CD8-positive, alpha-beta T cell (primary cell): ENCODE measurements at regions of chr22 and their contacts with region 1.

Region 1: DNA sequence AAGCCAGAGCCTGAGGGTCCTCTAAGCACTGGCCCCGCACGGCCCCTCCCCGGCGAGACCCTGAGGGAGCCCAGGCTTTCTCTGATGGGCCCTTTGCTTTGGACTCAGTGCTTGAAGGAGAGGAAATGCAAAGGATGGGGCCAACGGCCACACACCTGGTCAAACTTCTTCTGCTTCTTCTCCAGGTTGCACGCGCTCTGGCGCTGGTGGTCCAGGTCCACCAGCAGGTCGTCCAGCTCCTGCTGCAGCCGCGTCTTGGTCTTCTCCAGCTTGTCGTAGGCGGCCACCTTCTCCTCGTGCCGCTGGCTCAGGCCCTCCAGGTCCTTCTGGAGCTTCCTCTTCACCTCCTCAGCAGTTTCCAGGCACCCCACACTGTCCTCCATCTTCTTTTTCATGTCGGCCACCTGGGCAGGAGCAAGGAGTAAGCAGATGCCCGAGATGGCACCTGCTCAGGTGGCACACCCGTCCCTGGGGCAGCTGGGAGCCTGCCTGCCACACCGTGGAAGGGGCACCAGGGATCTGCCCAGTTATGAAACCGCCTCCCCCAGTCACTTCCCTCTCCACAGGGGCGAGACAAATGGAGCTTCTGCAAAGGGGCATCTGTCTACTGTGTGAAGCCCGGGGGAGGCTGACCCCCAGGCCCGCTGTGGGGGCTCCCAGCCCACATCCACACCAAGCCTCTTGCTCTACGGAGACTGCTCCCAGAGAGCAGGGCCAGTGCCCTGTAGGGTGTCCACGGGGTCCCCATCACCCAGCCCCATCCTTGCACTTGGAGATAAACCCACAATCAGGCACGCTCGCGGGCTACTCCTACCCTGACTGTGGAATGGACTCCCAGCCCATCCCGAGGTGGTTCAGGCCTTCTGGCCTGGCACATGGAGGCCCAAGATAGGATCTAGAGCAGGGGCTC is 39.2 kb downstream of the APOL1 start:
- DNase-seq: no peak
- ATAC-seq: no peak
- H3K4me3 ChIP-seq: no peak overlapping the region
- H3K4me3 Mint-ChIP-seq: peak overlapping the region; percentile 26
- H3K27ac ChIP-seq: no peak overlapping the region
- H3K27ac Mint-ChIP-seq: peak overlapping the region; percentile 81
- H3K4me1 ChIP-seq: peaks cover 38% of the 10 kb centered on the region
- H3K4me1 Mint-ChIP-seq: peaks cover 39% of the 10 kb centered on the region
- H3K27me3 ChIP-seq: no peaks in the 10 kb centered on the region
- H3K27me3 Mint-ChIP-seq: no peaks in the 10 kb centered on the region
- CTCF ChIP-seq: no peak

Region 2: DNA sequence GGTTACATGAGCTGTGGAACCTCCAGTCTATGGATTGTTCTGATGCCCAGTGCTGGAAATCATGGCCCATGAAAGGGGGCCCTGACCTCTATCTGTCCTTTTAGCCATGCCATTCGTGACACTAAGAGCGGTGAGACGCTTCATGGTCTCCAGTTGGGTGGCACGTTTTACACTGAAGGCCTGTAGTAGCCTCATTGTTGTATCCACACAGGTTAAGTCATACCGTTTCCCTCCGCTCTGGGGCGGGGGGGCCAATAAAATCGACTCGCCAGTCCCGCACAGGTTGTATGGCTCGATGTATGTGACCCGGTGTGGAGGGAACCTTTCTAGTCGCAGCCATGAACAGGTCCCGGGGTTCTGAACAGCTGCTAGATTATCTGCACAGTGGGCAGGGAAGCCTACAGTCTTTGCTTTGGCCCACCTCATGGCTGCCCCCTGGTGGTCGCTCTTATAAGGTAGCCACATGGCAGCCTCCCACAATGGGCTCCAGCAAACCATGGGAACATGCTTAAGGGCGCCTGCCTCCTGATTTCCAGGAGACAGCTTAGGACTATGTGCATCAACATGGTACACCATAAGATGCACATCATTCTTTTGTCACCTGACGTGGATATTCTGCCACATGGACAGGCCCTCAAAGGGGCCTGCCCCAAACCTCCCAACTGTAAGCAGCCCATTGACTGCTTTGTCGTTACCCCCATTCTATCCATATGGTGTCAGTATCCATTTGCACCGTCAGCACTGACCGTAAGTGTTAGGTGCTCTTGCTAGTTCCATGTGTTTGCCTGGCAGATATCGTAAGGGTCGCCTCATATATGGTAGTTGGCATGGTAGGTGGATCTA is 111.8 kb before region 1 on chr22:
- CTCF ChIA-PET with region 1: no interaction called
- POLR2A ChIA-PET with region 1: no interaction called
- intact Hi-C with region 1: no loop called
- DNase-seq: peak; percentile 75 to 94 (median 87)
- ATAC-seq: peak; percentile 99
- H3K4me3 ChIP-seq: no peak overlapping the region
- H3K4me3 Mint-ChIP-seq: no peak overlapping the region
- H3K27ac ChIP-seq: no peak overlapping the region
- H3K27ac Mint-ChIP-seq: no peak overlapping the region
- H3K4me1 ChIP-seq: peaks cover 4% of the 10 kb centered on the region
- H3K4me1 Mint-ChIP-seq: peaks cover 4% of the 10 kb centered on the region
- H3K27me3 ChIP-seq: no peaks in the 10 kb centered on the region
- H3K27me3 Mint-ChIP-seq: no peaks in the 10 kb centered on the region
- CTCF ChIP-seq: peak; percentile 84

Region 3: GRCh38 chr22:36486619-36487384 is 194.7 kb after region 1 on chr22:
- CTCF ChIA-PET with region 1: interaction called, 12 read pairs
- POLR2A ChIA-PET with region 1: interaction called, 4 read pairs
- intact Hi-C with region 1: no loop called
- DNase-seq: peak; percentile 31 to 84 (median 71)
- ATAC-seq: no peak
- H3K4me3 ChIP-seq: no peak overlapping the region
- H3K4me3 Mint-ChIP-seq: no peak overlapping the region
- H3K27ac ChIP-seq: no peak overlapping the region
- H3K27ac Mint-ChIP-seq: no peak overlapping the region
- H3K4me1 ChIP-seq: peaks cover 3% of the 10 kb centered on the region
- H3K4me1 Mint-ChIP-seq: peaks cover 5% of the 10 kb centered on the region
- H3K27me3 ChIP-seq: no peaks in the 10 kb centered on the region
- H3K27me3 Mint-ChIP-seq: no peaks in the 10 kb centered on the region
- CTCF ChIP-seq: peak; percentile 62